Dendritic cell treated with granulocyte-macrophage colony-stimulating factor and Interleukin-4, amounts not matched to agents 40 ng/mL and 50 ng/mL, for 4 days (primary cell): ENCODE measurements at regions of chr1 and their contacts with region 1.

Region 1: DNA sequence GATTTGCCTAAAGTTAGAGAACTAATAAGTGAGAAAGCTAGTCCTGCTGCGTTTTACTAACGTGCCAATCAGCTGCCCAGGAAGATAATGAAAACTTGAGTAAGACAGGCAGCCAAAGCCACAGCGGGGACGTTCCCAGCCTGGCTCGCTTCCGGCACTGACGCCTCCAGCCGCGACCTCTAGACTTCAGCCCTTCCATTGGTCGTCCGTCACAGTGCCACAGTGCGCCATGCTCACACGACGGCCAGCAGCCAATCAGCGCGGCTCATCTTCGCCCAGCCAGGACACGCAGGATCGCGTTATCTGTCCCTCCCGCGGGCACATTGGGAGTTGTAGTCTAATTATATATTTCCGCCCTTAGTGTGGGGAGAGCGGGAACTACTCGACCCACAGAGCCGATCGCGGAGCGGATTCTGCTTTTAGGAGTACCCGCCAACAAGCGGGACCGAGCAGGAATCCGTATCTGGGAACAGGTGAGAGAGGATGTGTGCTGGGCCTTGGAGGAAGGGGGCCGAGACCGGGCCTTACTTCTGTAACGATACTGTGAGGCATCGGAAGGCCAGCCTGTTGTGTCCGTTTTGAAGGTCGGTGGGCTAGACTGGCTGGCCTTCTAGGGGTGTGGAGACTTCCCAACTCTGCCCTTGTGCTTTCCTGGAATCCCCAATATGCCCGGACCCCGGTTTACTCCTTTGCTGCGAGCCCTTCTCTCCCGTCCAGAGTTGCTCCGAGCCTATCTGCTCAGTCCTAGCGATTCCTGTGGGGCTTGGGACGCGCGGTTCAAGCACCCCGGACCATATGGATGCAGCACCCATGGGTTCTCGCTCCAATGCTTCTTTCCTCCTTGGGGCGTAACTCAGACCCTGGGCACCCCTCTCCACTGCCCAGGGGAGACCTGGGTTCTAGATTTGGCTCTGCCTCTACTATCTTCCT is at the start of gene FDPS:
- H3K4me3 Mint-ChIP-seq: peak within 1 kb of the TSS; percentile 95
- H3K27ac Mint-ChIP-seq: peak within 1 kb of the TSS; percentile 94
- H3K4me1 Mint-ChIP-seq: peaks cover 38% of the 10 kb centered on the region
- H3K27me3 Mint-ChIP-seq: peaks cover 2% of the 10 kb centered on the region

Region 2: GRCh38 chr1:155261852-155262673 is 46.7 kb before region 1 on chr1 and contains the start of gene SCAMP3:
- intact Hi-C with region 1: loop called (anchors 1 kb)
- H3K4me3 Mint-ChIP-seq: peak within 1 kb of the TSS; percentile 95
- H3K27ac Mint-ChIP-seq: peak within 1 kb of the TSS; percentile 93
- H3K4me1 Mint-ChIP-seq: peaks cover 39% of the 10 kb centered on the region
- H3K27me3 Mint-ChIP-seq: no peaks in the 10 kb centered on the region

Region 3: DNA sequence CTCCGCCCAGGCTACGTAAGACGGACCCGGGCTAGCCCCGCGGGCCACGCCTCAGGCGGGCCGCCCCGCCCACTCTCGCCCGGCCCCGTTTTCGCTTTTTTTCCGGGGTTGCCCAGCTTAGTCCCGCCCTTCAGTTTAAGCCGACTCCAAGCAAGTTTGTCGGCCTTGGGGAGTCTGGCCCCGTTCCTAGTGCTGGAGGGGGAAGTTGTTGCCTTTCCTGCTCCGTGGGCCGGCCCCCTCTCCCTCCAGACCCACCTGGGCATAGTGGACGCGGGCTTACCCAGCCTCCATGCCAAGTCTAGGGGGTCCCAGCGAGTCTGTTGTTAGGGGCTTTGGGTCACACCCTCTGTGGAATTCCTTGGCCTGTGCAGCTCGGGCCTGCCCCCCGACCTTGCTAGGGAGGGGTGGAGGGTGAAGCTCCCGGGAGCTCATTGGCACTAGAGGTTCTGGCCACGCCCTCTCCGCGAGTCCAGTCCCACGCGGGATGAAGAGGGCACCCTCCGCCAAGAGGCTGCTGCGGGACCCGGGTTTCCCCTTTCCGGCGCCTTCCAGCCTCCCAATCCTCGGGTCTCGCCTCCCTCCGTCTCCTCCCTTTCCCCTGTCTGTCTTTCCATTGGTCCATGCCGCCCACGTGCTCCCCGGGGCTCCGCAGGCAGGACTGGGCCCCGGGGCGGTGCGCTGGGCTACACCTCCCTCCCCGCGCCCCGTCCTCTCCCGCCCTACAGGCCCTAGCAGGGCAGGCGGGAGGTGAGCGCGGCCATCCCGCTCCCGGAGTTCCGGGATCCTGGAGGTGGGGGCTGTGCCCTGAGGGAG is 15.2 kb after region 1 on chr1:
- intact Hi-C with region 1: loop called (anchors 2 kb)
- H3K4me3 Mint-ChIP-seq: peak overlapping the region; percentile 92
- H3K27ac Mint-ChIP-seq: peak overlapping the region; percentile 89
- H3K4me1 Mint-ChIP-seq: peaks cover 58% of the 10 kb centered on the region
- H3K27me3 Mint-ChIP-seq: peaks cover 6% of the 10 kb centered on the region